KBM-7 (cell line): ENCODE measurements at regions of chr17 and their contacts with region 1.

Region 1: DNA sequence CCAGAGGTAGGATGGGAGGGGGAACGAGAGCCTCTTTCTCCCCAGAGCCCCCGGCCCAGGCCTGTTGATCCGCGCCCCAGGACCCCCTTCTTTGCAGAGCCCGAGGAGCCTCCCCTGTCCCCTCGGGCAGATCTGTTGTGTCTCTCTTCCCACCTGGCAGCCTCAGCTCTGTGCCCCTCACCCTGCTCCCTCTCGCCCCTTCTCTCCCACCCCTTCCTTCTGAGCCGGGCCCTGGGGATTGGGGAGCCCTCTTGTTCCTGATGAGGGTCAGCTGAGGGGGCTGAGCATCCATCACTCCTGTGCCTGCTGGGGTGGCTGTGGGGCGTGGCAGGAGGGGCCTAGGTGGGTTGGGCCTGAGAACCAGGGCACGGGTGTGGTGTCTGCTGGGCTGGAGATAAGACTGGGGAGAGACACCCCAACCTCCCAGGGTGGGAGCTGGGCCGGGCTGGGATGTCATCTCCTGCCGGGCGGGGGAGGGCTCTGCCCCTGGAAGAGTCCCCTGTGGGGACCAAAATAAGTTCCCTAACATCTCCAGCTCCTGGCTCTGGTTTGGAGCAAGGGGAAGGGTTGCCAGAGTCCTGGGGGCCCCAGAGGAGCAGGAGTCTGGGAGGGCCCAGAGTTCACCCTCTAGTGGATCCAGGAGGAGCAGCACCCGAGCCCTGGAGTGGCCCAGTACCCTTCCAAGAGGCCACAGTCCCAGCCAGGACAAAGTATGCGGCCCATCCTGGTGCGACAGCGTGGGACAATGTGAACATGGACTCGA is 65.4 kb downstream of the MRC2 start:
- DNase-seq: peak; percentile 33

Region 2: DNA sequence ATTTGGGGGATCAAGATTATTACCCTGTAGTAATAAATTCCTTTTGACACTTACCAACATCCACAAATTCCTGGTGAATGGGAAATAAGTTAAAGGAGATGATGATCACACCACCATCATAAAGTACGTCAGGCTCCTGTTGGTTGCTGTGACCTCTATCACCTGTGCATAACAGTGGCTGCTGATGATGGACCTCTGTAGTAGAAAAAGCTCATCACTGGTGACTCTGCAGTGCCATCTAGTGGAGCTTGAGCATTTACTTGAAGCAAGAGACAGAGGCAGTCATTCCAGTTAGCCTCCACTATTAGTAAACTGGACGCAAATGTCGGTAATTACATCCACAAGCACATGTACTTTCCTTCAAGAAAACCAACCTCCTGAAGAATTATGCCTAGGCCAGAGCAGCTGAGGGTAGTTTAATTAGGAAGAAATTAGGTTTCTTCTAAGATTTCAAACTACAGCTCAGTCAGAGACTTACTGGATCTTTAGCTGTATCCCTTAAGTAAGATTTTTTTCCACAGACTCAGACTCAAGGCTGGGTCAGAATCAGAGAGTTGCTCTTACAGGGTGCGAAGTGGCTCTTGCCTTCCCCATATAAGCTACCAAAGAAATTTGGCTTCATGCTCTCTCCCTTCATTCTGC is 713.9 kb after region 1 on chr17:
- in situ Hi-C with region 1: loop called (anchors 25 kb)
- DNase-seq: peak; percentile 84